Activated CD8-positive, alpha-beta T cell treated with anti-CD3 and anti-CD28 coated beads, Interleukin-2, amount 10 ng/mL, durations not matched to agents 7 days and 5 days (primary cell): ENCODE measurements at regions of chrX and their contacts with region 1.

Region 1: DNA sequence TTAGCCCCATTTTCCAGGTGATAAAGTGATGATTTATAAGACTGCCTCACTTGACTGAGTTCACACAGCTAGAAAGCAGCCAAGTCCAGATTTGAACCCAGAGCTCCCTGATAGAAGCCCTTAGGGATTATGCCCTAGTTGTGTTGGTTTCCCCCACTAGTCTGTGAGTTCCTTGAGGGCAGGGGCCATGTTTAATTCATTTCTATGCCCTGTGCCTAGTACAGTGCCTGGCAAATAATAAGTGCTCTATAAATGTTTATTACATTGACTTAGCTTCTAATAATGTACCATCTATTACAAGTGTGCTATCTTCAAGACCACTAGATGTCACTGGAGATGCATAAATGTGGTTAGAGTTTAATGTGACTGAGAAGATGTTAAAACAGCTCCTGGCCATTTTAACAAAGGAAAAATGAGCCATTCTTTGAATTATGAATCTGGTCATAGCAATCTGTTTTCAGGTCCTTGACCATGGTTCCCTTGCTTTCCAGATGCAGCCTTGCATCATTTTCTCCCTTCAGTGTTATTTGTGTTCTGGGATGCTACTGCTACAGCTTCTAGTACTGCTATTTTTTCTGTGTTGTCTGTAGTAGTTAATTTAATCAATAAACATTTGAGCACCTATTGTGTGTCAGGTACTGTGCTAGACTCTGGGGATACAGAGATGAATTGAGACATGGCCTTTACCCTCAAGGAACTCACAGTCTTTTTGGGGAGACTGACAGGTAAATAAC is 43.2 kb downstream of the SLC9A6 start:
- DNase-seq: no peak
- ATAC-seq: no peak
- H3K4me3 Mint-ChIP-seq: no peak overlapping the region
- H3K27ac Mint-ChIP-seq: no peak overlapping the region
- H3K4me1 Mint-ChIP-seq: no peaks in the 10 kb centered on the region
- H3K27me3 Mint-ChIP-seq: no peaks in the 10 kb centered on the region

Region 2: GRCh38 chrX:135973548-135974278 is 54.7 kb before region 1 on chrX and contains the start of gene MMGT1:
- CTCF ChIA-PET with region 1: no interaction called
- POLR2A ChIA-PET with region 1: no interaction called
- DNase-seq: peak; percentile 87
- ATAC-seq: peak; percentile 91
- H3K4me3 Mint-ChIP-seq: peak within 1 kb of the TSS; percentile 88
- H3K27ac Mint-ChIP-seq: peak within 1 kb of the TSS; percentile 98
- H3K4me1 Mint-ChIP-seq: peaks cover 28% of the 10 kb centered on the region
- H3K27me3 Mint-ChIP-seq: no peaks in the 10 kb centered on the region
- total RNA-seq, gene MMGT1: 15.9 to 16.4 TPM

Region 3: GRCh38 chrX:136157187-136157586 is 128.8 kb after region 1 on chrX:
- CTCF ChIA-PET with region 1: interaction called, 68 read pairs
- POLR2A ChIA-PET with region 1: no interaction called
- DNase-seq: no peak
- ATAC-seq: no peak
- H3K4me3 Mint-ChIP-seq: no peak overlapping the region
- H3K27ac Mint-ChIP-seq: no peak overlapping the region
- H3K4me1 Mint-ChIP-seq: peaks cover 19% of the 10 kb centered on the region
- H3K27me3 Mint-ChIP-seq: no peaks in the 10 kb centered on the region

Region 4: GRCh38 chrX:136162831-136163570 is 134.6 kb after region 1 on chrX:
- CTCF ChIA-PET with region 1: interaction called, 68 read pairs
- POLR2A ChIA-PET with region 1: no interaction called
- DNase-seq: peak; percentile 61
- ATAC-seq: peak; percentile 79
- H3K4me3 Mint-ChIP-seq: no peak overlapping the region
- H3K27ac Mint-ChIP-seq: no peak overlapping the region
- H3K4me1 Mint-ChIP-seq: peaks cover 6% of the 10 kb centered on the region
- H3K27me3 Mint-ChIP-seq: no peaks in the 10 kb centered on the region

Region 5: DNA sequence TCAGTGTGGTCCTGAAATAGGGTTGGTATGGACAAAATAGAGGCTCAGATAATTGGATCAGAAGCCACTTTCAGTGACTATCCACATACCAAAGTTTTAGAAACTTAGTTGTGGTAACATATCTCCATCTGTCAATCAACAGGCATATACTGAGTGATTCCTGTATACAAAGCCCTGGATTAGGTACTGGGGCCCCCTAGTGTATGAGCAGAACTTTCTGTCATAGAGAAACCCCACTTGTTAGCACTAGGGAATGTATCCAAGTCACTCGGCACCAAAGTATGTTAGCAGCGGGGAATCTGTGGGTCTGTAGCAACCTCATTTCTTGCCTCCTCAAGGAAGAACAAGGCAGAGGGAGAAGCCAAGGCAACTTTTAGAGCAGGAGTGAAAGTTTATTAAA is 172.0 kb after region 1 on chrX:
- CTCF ChIA-PET with region 1: interaction called, 46 read pairs
- POLR2A ChIA-PET with region 1: no interaction called
- DNase-seq: peak; percentile 42
- ATAC-seq: peak; percentile 62
- H3K4me3 Mint-ChIP-seq: no peak overlapping the region
- H3K27ac Mint-ChIP-seq: no peak overlapping the region
- H3K4me1 Mint-ChIP-seq: peaks cover 36% of the 10 kb centered on the region
- H3K27me3 Mint-ChIP-seq: no peaks in the 10 kb centered on the region

Region 6: GRCh38 chrX:136209016-136209738 is 180.8 kb after region 1 on chrX:
- CTCF ChIA-PET with region 1: interaction called, 46 read pairs
- POLR2A ChIA-PET with region 1: no interaction called
- DNase-seq: peak; percentile 42
- ATAC-seq: peak; percentile 61
- H3K4me3 Mint-ChIP-seq: no peak overlapping the region
- H3K27ac Mint-ChIP-seq: no peak overlapping the region
- H3K4me1 Mint-ChIP-seq: peaks cover 11% of the 10 kb centered on the region
- H3K27me3 Mint-ChIP-seq: no peaks in the 10 kb centered on the region

Region 7: DNA sequence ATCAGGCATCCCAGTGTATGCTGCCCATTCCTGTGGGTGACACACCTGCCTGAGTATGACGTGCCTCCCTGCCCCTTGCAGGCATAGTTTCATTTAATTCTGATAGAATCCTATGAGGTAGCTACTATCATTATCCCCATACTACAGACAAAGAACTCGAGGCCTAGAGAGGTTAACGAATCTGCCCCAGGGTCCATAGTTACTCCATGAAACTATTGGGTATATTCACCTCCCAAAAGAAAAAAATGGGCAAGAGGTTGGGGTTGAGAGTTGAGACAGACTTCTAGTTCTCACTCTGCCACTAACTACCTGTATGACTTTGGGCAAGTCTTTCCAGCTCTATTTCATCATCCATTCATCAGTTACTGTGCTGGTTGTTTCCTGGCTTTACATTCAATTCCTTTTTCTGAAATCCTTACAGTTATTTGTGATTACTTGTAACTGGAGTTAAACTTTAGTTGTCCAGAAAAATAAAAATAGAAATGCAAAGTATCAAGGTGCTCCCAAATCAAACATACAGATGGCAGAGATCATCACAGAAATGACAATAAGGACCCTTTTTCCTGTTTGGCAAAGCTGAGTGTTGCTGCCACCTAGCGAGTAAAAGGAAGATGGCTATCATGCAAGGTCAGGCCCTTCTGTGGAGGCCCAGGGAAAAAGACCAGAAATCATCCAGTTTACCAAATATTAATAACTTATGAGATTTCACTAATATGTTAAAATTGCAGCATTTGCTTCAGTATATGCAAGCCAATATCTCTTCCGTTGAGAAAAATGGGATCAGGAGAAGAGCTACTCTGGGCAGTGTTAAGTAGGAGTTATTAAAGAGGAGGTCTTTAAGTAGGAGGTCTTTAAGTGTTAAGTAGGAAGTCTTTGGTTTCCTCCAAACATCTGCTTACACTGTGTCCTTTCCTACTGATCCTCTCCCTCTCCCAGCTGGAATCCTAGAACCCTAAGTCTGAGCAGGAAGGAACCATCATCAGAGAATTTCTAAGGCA is 239.9 kb after region 1 on chrX:
- CTCF ChIA-PET with region 1: interaction called, 16 read pairs
- POLR2A ChIA-PET with region 1: no interaction called
- DNase-seq: peak; percentile 64
- ATAC-seq: peak; percentile 71
- H3K4me3 Mint-ChIP-seq: no peak overlapping the region
- H3K27ac Mint-ChIP-seq: no peak overlapping the region
- H3K4me1 Mint-ChIP-seq: peaks cover 21% of the 10 kb centered on the region
- H3K27me3 Mint-ChIP-seq: no peaks in the 10 kb centered on the region